Gastrocnemius medialis (tissue), 4 donors: ENCODE measurements at regions of chr1 and their contacts with region 1.

Region 1: DNA sequence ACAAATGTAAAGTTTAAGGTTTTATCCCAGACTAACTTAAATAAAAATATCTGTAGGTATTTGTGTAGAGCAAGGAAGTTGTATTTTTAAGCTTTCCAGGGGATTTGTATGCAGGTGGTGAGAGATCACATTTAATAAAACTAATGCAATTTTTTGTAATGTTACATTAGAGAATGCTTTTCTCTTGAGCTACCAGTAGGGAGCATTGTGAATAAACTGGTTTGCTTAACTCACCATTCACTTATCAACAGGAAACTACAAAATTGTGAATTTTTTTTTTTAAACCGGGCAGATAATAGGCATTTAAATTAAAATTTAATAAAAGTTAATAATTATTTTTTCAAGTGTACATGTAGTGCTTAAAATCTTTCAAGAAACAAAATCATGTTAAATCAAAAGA is 78.6 kb downstream of the IVNS1ABP start:
- DNase-seq: no peak
- ATAC-seq: no peak
- H3K4me3 ChIP-seq: no peak overlapping the region
- H3K27ac ChIP-seq: no peak overlapping the region
- H3K4me1 ChIP-seq: peaks cover 5 to 14% of the 10 kb centered on the region in 2 donors
- H3K27me3 ChIP-seq: no peaks in the 10 kb centered on the region
- CTCF ChIP-seq: peak in 1 of 5 experiments; percentile 25
- POLR2A ChIP-seq: no peak

Region 2: DNA sequence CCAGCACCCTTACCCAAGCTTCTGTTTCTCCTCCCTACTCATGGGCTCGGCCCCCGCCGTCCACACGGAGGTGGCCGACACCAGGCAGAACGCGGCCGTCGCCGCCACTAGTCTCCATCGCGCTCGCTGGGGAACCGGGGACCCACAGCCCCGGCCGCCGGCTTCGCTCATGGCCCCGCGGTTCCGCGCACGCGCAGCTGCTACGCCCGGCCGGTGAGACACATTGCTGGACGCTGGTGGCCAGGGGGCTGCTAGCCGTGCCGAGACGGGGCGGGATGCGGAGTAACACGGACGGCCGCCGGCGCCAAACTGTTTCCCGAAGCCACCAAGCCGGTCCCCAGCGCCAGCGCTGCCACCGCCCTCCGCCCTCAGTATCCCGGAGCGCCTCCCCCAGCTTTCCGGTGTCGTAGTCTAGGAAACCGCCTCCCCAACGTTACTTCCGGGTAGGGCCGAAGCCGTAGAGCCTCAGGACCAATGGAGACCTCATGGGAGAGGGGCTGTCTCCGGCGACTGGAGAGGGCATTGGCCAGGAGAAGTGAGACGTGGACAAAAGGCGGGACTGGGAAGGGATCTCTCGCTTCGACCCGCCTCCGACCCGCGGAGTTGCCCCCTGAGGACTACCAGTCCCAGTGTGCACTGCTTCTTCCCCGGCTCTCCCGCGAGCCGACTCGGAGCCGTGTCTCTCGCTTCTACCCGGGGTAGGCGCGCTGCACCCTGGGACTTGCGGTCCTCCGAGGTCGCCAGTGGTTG is 483.8 kb before region 1 on chr1 and contains the start of gene EDEM3:
- in situ Hi-C with region 1: no loop called
- intact Hi-C with region 1: no loop called
- DNase-seq: peak; percentile 99 to 100
- ATAC-seq: peak; percentile 97
- H3K4me3 ChIP-seq: peak within 1 kb of the TSS; percentile 94 to 97 (median 96)
- H3K27ac ChIP-seq: peak within 1 kb of the TSS; percentile 93 to 99 (median 96)
- H3K4me1 ChIP-seq: peaks cover 16 to 17% of the 10 kb centered on the region in 2 donors
- H3K27me3 ChIP-seq: no peaks in the 10 kb centered on the region
- CTCF ChIP-seq: peak in 1 of 5 experiments; percentile 15
- POLR2A ChIP-seq: peak; percentile 98
- total RNA-seq, gene EDEM3: 18.1 to 51.1 (median 31.9) TPM

Region 3: DNA sequence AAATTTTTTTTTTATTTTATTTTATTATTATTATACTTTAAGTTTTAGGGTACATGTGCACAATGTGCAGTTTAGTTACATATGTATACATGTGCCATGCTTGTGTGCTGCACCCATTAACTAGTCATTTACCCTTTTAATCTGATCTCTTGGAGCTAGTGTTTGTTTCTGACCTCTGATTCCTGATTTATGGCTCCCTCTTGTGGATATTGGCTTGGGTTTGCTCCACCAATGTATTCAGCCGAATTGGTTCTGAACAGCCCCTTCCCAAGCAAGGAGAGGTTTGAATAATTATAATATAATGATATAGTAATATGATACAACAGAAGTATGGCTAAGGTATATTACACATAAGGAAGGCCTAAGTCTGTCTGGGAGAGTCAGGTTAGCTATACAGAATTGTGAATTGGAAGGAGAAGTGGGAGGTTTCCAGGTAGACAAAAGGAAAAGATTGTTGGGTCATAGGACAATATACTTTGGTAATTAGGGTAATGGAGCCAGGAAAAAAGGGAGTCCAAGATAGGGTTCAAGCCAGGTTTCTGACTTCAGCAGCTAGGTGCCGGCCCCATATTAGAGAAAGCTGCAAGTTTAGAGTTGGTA is 442.7 kb after region 1 on chr1:
- in situ Hi-C with region 1: loop called in 2 of 4 experiments (anchors 25 kb)
- intact Hi-C with region 1: no loop called
- DNase-seq: no peak
- ATAC-seq: peak in 1 of 2 donors; percentile 67
- H3K4me3 ChIP-seq: no peak overlapping the region
- H3K27ac ChIP-seq: no peak overlapping the region
- H3K4me1 ChIP-seq: peaks cover 0 to 5% of the 10 kb centered on the region in 2 donors
- H3K27me3 ChIP-seq: no peaks in the 10 kb centered on the region
- CTCF ChIP-seq: peak; percentile 13 to 48 (median 23)
- POLR2A ChIP-seq: no peak